ENCODE measurements at regions of chr6 and their contacts with region 1.

Region 1: GRCh38 chr6:129709769-129710449 is at the start of gene ARHGAP18:
- H3K4me3 ChIP-seq: peak within 1 kb of the TSS; percentile 39
- H3K27ac ChIP-seq: peak within 1 kb of the TSS; percentile 37
- H3K4me1 ChIP-seq: peaks cover 3% of the 10 kb centered on the region; the same call in 1 of the 2 replicates
- CTCF ChIP-seq: no peak

Region 2: DNA sequence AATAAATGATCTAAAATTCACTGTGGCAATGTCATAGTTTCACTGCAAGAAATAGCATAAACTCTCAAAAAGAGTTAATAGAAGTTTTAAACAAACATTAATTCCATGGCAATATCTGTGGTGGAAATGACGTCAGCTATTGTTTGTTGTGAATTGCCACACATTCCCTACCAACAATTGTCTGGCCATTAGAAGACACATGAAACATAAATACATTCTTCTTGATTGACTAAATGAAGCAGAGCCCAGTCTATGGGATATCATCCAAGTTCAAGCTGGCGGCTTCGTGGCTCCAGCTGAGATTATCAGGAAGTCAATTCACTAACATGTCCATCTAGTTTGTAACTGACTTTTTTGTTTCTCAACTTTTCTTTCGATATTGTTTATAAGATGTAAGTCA is 368.9 kb before region 1 on chr6:
- CTCF ChIA-PET with region 1: no interaction called
- POLR2A ChIA-PET with region 1: no interaction called
- H3K4me3 ChIP-seq: no peak overlapping the region
- H3K27ac ChIP-seq: no peak overlapping the region
- H3K4me1 ChIP-seq: no peaks in the 10 kb centered on the region
- CTCF ChIP-seq: no peak

Region 3: DNA sequence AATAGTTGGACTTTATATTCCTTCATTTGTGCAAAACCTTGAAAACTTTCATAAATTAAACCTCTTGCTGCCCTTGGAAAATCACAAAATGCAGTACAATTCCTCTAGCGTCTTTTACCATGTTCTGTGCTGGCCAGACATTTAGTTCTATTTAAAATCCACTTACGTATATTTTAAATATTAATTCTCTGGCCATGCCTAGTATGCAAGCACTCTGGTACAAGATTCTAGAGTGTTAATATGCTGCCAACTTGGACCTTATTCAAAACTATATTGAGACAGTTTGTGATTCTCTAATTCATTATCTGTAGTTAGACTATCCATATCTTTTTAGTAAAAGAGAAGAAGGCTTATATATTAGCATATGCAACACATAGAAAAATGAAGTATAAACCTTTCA is 328.0 kb before region 1 on chr6:
- CTCF ChIA-PET with region 1: no interaction called
- POLR2A ChIA-PET with region 1: no interaction called
- H3K4me3 ChIP-seq: no peak overlapping the region
- H3K27ac ChIP-seq: no peak overlapping the region
- H3K4me1 ChIP-seq: no peaks in the 10 kb centered on the region
- CTCF ChIP-seq: no peak

Region 4: DNA sequence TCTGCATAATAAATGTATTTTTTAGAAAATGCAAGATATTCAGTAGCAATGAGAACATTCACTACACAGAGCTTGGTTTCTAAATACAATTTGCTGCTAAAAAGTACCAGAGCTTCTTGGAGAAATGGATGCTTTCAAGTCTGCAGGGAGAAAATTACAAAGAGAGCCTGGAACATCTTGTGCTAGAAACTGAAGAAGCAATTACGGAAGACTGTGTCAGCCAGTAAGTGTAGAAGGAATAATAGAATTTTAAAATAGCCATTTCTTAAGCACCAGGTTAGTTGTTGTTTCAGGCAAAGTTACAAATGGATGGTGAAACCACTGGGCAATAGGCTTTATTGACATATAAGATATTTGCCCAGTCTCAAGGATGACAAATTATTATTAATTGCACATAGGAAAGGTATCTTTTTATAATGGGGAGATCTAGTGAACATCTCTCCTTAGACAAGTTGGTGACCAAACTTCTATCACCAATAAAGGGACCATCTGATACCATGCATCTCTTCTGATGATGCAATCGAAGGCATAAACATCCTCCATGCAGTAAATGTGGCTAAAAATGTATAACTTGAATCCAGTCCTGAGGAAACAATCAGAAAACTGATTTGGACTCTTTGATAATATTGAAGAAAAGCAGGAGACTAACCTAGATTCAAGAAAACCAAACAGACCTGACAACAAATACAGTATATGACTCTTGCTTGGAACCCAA is 81.7 kb before region 1 on chr6:
- CTCF ChIA-PET with region 1: no interaction called
- POLR2A ChIA-PET with region 1: no interaction called
- H3K4me3 ChIP-seq: no peak overlapping the region
- H3K27ac ChIP-seq: no peak overlapping the region
- H3K4me1 ChIP-seq: no peaks in the 10 kb centered on the region
- CTCF ChIP-seq: no peak

Region 5: DNA sequence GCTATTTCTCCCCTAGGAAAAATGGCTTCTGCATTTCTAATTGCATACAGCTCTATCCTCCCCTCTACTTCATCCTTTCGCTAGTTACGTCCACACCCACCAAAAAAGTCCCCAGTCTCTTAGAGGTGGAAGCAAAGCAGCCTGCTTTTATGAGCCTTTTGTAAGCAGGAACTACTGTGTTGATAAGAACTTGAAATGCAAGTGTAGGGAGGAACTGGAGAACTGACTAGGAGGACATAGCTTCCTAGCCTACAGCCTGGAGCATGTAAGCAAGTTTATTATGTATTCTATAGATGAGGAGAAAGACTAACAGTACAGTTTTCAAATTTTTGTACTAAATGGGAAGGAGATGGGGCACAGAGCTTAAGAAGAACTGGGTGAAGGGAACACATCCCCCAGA is 10.2 kb before region 1 on chr6:
- CTCF ChIA-PET with region 1: interaction called, 3 read pairs
- POLR2A ChIA-PET with region 1: interaction called, 10 read pairs
- H3K4me3 ChIP-seq: no peak overlapping the region
- H3K27ac ChIP-seq: no peak overlapping the region
- H3K4me1 ChIP-seq: peaks cover 5% of the 10 kb centered on the region; the same call in 1 of the 2 replicates
- CTCF ChIP-seq: no peak

Region 6: DNA sequence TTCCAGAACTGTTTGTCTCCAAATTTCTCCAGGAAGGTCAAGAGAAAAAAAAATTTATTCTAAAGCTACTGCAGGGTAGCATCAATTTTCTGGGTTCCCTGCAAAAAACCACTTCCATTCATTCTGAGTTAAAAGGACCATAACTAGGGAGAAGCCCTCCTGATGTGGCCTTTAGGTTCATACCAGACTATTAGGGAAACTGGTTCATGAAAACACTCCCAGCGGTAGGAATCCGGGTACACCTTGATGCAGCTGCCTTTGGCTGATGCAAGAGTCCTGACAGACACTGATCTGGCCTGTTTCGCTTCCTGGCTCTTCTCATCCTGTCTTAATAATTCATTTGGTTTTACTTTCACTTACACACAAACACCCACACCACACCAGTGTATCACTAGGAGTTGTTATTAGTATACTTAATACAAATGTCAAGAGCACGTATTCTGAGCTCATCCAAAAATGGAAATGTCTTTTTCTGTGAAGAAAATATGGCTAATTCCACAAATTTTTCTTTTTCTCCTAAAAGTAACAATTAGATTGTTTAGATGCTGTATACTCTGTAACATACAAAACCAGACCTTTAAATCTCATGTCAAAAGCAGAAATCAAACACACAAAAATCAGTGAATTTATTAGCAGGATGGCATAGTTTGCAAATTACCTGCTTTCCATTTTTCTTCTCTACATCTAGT is 38.4 kb after region 1 on chr6:
- CTCF ChIA-PET with region 1: interaction called, 4 read pairs
- POLR2A ChIA-PET with region 1: interaction called, 11 read pairs
- H3K4me3 ChIP-seq: no peak overlapping the region
- H3K27ac ChIP-seq: no peak overlapping the region
- H3K4me1 ChIP-seq: peaks cover 17% of the 10 kb centered on the region
- CTCF ChIP-seq: no peak